OCI-LY7 (cell line): ENCODE measurements at regions of chrX and their contacts with region 1.

Region 1: DNA sequence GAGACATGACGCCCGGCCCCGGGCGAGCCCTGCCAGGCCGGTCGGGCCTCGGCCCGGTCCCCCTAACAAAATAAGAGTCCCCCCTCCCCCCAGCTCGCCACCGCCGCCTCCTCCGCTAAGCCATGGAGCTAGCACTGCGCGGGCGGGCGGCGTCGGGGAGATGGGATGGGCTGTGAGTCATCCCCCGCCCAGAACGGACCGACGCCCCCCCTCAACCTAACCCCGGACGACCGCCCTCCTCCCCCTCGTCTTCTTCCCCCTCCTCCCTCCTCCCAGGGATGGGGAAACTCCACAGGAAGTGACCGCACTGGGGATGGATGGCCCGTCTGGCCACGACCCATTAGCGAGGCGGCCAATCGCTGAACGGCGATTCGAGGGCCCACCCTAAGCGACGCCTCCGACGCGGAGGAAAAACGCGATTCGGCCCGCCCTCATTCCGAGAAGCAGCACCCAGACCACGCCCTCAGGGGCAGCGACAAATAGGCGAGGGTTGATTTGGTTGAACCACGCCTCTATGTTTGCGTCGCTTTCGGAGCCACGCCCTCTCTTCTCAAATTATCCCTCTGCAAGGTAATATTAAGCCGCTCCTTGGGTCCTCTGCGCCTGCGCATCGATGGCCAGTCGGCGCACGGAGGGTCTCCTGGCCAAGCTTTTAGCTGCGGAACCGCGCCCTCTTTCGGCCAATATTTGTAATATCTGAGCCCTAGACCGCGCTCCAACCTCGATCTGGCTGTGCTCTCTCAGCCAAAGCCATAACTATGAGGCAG is at the start of gene TFE3:
- DNase-seq: peak; percentile 98
- H3K4me3 ChIP-seq: peak within 1 kb of the TSS; percentile 84
- H3K27ac ChIP-seq: peak within 1 kb of the TSS; percentile 55
- H3K4me1 ChIP-seq: peaks cover 45% of the 10 kb centered on the region
- CTCF ChIP-seq: peak; percentile 73
- total RNA-seq, gene TFE3: 7.6 and 10.2 TPM in 2 replicates

Region 2: DNA sequence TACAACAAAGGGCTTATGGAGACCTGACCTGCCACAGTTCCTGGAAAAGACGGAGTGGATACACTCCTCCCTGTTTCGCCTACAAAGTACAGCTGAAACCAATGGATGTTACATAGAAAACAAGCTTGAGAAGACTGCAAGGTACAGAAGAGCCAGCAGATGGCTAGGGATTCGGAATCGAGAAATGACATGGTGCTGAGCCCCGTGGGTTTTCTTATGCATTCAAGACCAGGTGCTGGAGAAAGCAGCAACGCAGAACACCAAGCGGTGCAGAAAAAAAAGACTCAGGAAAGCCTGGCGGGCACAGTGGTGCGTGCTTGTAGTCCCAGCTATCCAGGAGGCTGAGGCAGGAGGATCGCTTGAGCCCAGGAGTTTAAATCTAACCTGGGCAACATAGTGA is 159.7 kb before region 1 on chrX:
- CTCF ChIA-PET with region 1: no interaction called
- POLR2A ChIA-PET with region 1: no interaction called
- intact Hi-C with region 1: no loop called
- DNase-seq: no peak
- H3K4me3 ChIP-seq: no peak overlapping the region
- H3K27ac ChIP-seq: no peak overlapping the region
- H3K4me1 ChIP-seq: no peaks in the 10 kb centered on the region
- CTCF ChIP-seq: no peak

Region 3: DNA sequence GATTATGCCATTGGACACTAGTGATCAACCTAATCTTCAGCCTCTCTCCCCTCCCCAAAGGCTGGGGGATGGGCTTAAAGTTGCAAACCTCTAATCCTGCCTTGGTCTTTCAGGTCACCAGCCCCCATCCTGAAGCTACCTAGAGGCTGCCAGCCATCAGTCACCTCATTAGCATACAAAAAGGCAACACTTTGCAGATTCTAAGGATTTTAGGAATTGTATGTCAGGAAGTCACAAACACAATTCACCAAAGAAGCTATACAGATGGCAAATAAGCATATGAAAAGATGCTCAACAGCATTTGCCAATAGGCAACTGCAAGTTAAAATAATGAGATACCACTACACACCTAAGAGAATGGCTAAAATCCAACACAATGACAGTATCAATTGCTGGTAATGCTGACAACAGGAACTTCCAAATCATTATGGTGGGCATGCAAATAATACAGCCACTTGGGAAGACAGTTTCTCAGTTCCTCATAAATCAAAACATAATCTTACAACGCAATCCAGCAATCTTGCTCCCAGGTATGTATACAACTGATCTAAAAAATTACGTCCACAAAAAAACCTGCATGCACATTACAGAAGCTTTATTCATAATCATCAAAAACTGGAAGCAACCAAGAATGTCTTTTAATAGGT is 115.5 kb before region 1 on chrX:
- CTCF ChIA-PET with region 1: no interaction called
- POLR2A ChIA-PET with region 1: no interaction called
- intact Hi-C with region 1: no loop called
- DNase-seq: no peak
- H3K4me3 ChIP-seq: peak overlapping the region; percentile 24
- H3K27ac ChIP-seq: peak overlapping the region; percentile 58
- H3K4me1 ChIP-seq: peaks cover 22% of the 10 kb centered on the region
- CTCF ChIP-seq: no peak

Region 4: GRCh38 chrX:49002091-49002935 is 41.1 kb before region 1 on chrX and contains the start of gene GRIPAP1:
- CTCF ChIA-PET with region 1: no interaction called
- POLR2A ChIA-PET with region 1: interaction called, 9 read pairs
- intact Hi-C with region 1: loop called (anchors 2 kb)
- DNase-seq: peak; percentile 94
- H3K4me3 ChIP-seq: peak within 1 kb of the TSS; percentile 88
- H3K27ac ChIP-seq: peak within 1 kb of the TSS; percentile 75
- H3K4me1 ChIP-seq: peaks cover 20% of the 10 kb centered on the region
- CTCF ChIP-seq: no peak
- total RNA-seq, gene GRIPAP1: 27.5 and 42.7 TPM in 2 replicates